ENCODE measurements at regions of chr11 and their contacts with region 1.

Region 1: DNA sequence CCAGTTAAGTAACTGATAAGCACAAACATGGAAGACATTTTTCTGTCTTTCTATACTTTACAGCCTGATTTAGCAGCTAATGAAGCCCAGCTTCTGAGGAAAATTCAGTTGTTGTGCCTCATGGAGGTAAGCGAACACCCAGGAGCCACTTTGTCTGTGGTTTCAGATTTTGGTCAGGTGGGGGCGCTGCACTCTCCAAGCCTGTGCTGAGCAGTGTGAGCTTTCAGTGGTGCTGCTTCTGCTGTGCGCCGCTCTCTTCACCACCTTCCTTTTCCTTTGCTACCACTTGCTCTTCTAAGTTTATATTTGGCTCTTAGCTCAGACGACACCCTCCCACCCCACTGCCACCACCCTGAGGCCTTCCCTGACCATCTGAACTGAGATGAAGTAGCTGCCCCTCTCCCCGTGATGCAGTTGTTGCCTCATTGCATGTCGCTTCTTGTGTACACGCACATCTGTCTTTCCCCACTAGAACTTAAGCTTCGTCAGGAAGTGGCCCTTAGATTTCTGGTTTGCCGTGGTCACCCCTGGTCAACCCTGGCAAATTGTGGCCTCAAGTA is 14.0 kb downstream of the PSMD13 start:
- DNase-seq: peak; percentile 90
- ATAC-seq: peak; percentile 97
- H3K4me3 Mint-ChIP-seq: peak overlapping the region; percentile 29
- H3K27ac Mint-ChIP-seq: peak overlapping the region; percentile 79
- H3K4me1 Mint-ChIP-seq: peaks cover 21% of the 10 kb centered on the region
- H3K27me3 Mint-ChIP-seq: peaks cover 2% of the 10 kb centered on the region

Region 2: DNA sequence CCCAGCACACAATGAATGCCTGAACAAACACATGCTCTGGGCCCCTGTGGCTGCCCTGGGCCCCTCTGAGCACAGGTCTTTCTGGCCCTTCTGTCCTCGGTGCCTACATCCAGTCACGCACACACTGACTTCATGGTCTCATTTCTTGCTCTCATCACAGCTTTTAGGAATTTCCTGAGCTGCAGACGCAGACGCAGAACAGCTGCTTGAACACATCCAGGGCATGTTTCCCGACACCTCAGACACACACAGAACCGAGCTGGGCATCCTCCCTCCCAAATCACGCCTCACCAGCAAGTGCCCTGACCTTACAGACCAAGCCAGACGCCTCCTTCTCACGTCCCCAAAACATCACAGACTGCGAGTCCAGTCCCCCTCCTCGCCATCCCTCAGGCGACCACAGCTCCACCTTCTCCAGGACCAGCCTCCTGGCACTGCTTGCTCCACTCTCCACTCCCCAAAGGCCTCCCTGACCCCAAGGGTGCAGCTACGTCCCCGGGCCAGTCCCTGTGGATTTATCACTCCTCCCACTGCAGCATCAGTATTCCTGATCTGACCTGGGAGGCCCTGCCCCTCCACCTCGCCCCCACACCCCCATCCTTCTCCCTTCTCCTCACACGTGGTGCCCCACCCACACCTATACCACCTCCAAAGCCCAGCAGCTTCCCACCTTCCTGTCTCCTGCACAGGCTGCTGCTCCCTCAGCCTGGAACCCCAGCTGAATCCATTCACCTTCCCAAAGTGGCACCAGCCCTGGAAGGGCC is 27.6 kb before region 1 on chr11:
- CTCF ChIA-PET with region 1: interaction called, 10 read pairs
- POLR2A ChIA-PET with region 1: no interaction called
- DNase-seq: no peak
- ATAC-seq: no peak
- H3K4me3 Mint-ChIP-seq: no peak overlapping the region
- H3K27ac Mint-ChIP-seq: no peak overlapping the region
- H3K4me1 Mint-ChIP-seq: peaks cover 6% of the 10 kb centered on the region
- H3K27me3 Mint-ChIP-seq: no peaks in the 10 kb centered on the region

Region 3: DNA sequence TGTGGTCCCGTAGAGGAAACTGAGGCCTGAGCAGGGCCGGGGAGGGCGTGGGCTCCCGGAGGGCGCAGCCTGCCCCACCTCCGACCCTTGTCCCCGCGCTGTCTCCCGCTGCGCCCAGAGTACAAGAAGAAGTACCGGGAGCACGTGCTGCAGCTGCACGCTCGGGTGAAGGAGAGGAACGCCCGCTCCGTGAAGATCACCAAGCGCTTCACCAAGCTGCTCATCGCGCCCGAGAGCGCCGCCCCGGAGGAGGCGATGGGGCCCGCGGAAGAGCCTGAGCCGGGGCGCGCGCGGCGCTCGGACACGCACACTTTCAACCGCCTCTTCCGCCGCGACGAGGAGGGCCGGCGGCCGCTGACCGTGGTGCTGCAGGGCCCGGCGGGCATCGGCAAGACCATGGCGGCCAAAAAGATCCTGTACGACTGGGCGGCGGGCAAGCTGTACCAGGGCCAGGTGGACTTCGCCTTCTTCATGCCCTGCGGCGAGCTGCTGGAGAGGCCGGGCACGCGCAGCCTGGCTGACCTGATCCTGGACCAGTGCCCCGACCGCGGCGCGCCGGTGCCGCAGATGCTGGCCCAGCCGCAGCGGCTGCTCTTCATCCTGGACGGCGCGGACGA is 29.3 kb after region 1 on chr11:
- CTCF ChIA-PET with region 1: interaction called, 73 read pairs
- POLR2A ChIA-PET with region 1: interaction called, 36 read pairs
- DNase-seq: peak; percentile 68
- ATAC-seq: peak; percentile 28
- H3K4me3 Mint-ChIP-seq: peak overlapping the region; percentile 81
- H3K27ac Mint-ChIP-seq: peak overlapping the region; percentile 90
- H3K4me1 Mint-ChIP-seq: peaks cover 55% of the 10 kb centered on the region
- H3K27me3 Mint-ChIP-seq: peaks cover 9% of the 10 kb centered on the region

Region 4: GRCh38 chr11:299951-300735 is 49.3 kb after region 1 on chr11:
- CTCF ChIA-PET with region 1: interaction called, 47 read pairs
- POLR2A ChIA-PET with region 1: interaction called, 8 read pairs
- DNase-seq: no peak
- ATAC-seq: no peak
- H3K4me3 Mint-ChIP-seq: no peak overlapping the region
- H3K27ac Mint-ChIP-seq: peak overlapping the region; percentile 46
- H3K4me1 Mint-ChIP-seq: peaks cover 76% of the 10 kb centered on the region
- H3K27me3 Mint-ChIP-seq: peaks cover 9% of the 10 kb centered on the region

Region 5: GRCh38 chr11:355581-356458 is 105.0 kb after region 1 on chr11:
- CTCF ChIA-PET with region 1: interaction called, 32 read pairs
- POLR2A ChIA-PET with region 1: interaction called, 3 read pairs
- DNase-seq: peak; percentile 92
- ATAC-seq: peak; percentile 61
- H3K4me3 Mint-ChIP-seq: peak overlapping the region; percentile 84
- H3K27ac Mint-ChIP-seq: peak overlapping the region; percentile 89
- H3K4me1 Mint-ChIP-seq: peaks cover 46% of the 10 kb centered on the region
- H3K27me3 Mint-ChIP-seq: peaks cover 13% of the 10 kb centered on the region

Region 6: DNA sequence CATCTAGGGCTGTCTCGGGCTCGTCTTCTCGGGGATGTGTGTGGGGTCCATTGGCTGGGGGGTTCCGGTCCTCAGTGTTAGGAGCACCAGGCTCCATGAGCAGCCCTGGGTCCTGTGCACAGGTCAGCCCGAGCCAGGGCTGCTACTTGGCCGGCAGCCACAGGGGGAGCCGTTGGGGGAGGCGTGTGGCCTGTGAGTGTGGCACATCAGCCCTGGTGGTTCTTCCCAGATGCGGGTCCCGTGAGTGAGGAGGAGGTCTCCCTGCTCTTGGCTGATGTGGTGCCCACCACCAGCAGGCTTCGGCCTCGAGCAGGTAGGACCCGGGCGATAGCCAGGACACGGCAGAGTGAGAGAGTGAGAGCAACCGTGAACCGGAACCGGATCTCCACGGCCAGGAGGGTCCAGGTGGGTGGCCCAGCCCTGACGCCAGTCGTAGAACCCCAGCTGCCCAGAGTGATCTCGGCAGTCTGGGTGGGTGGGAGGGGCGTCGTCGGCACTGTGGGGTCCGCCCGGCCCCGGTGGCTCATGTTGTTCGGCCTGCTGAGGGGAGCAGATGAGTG is 346.4 kb after region 1 on chr11:
- CTCF ChIA-PET with region 1: no interaction called
- POLR2A ChIA-PET with region 1: no interaction called
- DNase-seq: no peak
- ATAC-seq: peak; percentile 25
- H3K4me3 Mint-ChIP-seq: no peak overlapping the region
- H3K27ac Mint-ChIP-seq: peak overlapping the region; percentile 57
- H3K4me1 Mint-ChIP-seq: peaks cover 26% of the 10 kb centered on the region
- H3K27me3 Mint-ChIP-seq: no peaks in the 10 kb centered on the region

Measured in activated CD8-positive, alpha-beta T cell treated with anti-CD3 and anti-CD28 coated beads, Interleukin-2, amount 10 ng/mL, durations not matched to agents 7 days and 5 days (primary cell).